ENCODE measurements at regions of chr2 and their contacts with region 1.

Region 1: GRCh38 chr2:55014962-55015939 is 35.0 kb downstream of the RTN4 start:
- DNase-seq: peak; percentile 83
- ATAC-seq: peak; percentile 76
- H3K4me3 ChIP-seq: no peak overlapping the region
- H3K27ac ChIP-seq: no peak overlapping the region
- H3K4me1 ChIP-seq: peaks cover 69% of the 10 kb centered on the region
- H3K27me3 ChIP-seq: no peaks in the 10 kb centered on the region
- CTCF ChIP-seq: peak; percentile 88

Region 2: GRCh38 chr2:54952978-54953545 is 62.2 kb before region 1 on chr2:
- CTCF ChIA-PET with region 1: no interaction called
- POLR2A ChIA-PET with region 1: no interaction called
- intact Hi-C with region 1: loop called (anchors 1 kb)
- DNase-seq: peak; percentile 91
- ATAC-seq: peak; percentile 80
- H3K4me3 ChIP-seq: peak overlapping the region; percentile 11
- H3K27ac ChIP-seq: peak overlapping the region; percentile 94
- H3K4me1 ChIP-seq: peaks cover 49% of the 10 kb centered on the region
- H3K27me3 ChIP-seq: no peaks in the 10 kb centered on the region
- CTCF ChIP-seq: no peak

Region 3: DNA sequence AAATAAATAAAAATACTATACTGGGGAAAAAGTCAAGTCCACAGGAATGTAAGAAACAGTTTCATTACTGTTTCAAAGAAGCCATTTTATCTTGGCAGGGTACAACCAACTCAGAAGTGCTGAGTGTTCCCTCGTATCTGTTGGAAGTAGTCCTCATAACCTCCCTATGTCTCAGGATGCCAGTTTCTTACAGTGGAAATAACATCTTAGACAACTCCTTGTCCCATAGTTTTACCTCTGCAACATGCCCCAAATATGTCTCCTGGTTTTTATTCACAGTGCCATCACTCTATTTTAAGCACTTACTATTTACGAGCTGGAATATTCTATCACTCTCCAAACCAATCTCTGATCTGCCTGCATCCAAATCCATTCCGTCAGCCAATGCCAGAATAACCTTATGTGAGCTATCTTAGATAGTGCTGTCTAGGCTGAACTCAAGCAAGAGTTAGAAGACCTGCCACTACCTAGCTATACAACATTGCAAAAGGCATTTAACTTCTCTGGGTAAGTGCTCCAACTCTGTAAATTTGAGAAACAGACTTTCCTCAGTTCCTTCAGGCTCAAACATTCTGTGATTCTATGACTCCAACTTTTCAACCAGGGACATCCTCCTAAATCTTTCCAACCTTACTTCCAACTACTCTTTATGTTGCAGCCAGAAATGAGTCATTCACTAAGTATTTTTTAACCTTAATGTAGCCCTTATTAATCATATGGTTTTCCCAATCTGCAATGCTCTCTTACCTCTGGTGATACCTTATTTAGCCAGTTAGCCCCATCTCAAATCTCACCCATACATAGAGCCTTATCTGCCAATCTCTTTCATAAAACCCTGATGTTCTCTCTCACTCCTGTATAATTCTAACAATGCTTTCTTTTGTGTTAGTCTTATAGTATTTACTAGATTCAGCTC is 31.6 kb before region 1 on chr2:
- CTCF ChIA-PET with region 1: no interaction called
- POLR2A ChIA-PET with region 1: no interaction called
- intact Hi-C with region 1: loop called (anchors 2 kb)
- DNase-seq: peak; percentile 92
- ATAC-seq: peak; percentile 80
- H3K4me3 ChIP-seq: 0 out of 2 replicates have a peak overlapping the region, but pooled peaks have one; percentile 3
- H3K27ac ChIP-seq: peak overlapping the region; percentile 80
- H3K4me1 ChIP-seq: peaks cover 65% of the 10 kb centered on the region
- H3K27me3 ChIP-seq: no peaks in the 10 kb centered on the region
- CTCF ChIP-seq: no peak

Region 4: DNA sequence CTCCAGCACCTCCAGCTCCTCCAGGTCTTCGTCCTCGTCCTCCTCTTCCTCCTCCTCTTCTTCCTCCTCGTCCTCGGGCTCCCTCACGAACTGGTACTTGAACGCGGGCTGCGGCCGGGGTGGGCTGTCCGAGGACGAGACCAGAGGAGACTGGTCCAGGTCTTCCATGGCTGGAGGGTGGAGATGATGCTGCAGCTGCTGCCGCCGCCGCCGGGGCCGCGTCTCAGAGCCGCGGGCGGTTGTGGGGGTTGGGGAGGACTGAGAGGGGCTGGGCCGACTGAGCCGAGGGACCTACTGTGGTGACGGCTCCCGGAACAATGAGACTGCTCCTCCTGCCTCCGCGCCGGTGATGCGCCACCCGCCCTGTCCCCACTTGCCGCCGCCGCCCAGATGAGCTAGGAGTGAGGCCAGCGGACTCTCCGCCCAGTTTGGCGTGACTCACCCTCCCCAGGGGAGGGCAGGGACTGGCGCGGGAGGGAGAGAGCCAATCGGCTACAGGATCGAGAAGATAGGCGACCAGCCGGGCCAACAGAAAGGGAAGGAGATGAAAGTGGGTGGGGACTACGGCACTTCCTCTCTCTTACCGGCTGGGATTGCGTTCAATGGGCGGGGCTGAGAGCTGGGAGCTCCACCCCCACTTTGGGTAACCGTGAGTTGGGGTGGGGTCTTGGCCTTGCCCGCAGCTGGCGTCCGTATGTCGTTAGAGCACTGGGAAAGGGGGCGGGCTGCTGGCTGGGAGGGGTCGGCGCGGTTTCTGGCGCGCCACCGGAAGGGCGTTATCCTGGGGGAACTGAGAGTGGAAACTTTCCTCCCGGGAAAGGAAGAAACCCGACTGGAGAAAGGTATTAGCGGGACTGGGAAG is 35.1 kb after region 1 on chr2 and contains the start of gene RTN4:
- CTCF ChIA-PET with region 1: no interaction called
- POLR2A ChIA-PET with region 1: interaction called, 3 read pairs
- intact Hi-C with region 1: loop called (anchors 1 kb)
- DNase-seq: peak; percentile 99
- ATAC-seq: peak; percentile 74
- H3K4me3 ChIP-seq: peak within 1 kb of the TSS; percentile 74
- H3K27ac ChIP-seq: peak within 1 kb of the TSS; percentile 97
- H3K4me1 ChIP-seq: peaks cover 26% of the 10 kb centered on the region
- H3K27me3 ChIP-seq: no peaks in the 10 kb centered on the region
- CTCF ChIP-seq: no peak
- total RNA-seq, gene RTN4: 150 and 170 TPM in 2 replicates

Region 5: DNA sequence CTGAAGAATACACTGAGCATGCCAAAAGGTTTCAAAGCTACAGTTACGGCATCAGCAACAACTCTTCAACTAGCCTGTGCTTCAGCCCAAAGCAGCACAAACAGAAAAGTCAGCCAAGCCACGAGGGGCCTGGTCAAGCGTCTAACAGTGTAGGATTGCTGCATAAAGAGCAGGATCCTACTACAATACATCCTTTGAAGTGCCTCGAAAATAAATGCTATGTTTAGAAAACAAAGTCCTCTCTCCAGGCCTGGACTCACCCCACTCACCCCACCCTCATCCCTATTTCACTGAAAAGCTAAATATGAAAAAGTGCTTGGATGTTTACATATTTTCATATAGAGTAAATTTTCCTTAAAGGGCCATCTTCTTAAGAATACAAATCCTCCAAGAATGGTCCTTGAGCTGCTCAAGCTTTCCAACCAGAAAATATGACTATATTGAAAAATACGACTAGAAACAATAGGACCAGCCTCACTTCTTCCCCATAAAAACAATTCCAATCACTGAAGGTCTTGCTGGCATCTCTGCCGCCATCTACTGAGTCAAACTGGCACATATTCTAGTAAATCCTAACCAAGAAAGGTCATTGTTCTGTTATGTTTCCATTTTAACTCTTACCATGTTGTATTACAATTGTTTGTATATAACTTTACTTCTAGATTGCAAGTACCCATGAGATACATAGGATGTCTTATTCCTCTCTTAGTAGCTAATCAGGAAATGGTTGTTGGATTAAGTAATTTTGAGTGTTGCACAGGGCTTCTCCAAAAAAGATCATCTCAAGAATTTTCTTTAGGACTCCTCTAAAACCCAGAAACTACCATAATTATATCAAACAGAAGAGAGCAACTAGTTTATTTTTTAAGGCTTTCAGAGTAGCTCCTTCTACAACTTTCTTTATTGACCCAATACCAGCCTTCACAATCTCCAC is 153.2 kb after region 1 on chr2:
- CTCF ChIA-PET with region 1: interaction called, 4 read pairs
- POLR2A ChIA-PET with region 1: no interaction called
- intact Hi-C with region 1: loop called (anchors 1 kb)
- DNase-seq: peak; percentile 77
- ATAC-seq: peak; percentile 60
- H3K4me3 ChIP-seq: no peak overlapping the region
- H3K27ac ChIP-seq: no peak overlapping the region
- H3K4me1 ChIP-seq: peaks cover 23% of the 10 kb centered on the region
- H3K27me3 ChIP-seq: no peaks in the 10 kb centered on the region
- CTCF ChIP-seq: peak; percentile 92

Region 6: DNA sequence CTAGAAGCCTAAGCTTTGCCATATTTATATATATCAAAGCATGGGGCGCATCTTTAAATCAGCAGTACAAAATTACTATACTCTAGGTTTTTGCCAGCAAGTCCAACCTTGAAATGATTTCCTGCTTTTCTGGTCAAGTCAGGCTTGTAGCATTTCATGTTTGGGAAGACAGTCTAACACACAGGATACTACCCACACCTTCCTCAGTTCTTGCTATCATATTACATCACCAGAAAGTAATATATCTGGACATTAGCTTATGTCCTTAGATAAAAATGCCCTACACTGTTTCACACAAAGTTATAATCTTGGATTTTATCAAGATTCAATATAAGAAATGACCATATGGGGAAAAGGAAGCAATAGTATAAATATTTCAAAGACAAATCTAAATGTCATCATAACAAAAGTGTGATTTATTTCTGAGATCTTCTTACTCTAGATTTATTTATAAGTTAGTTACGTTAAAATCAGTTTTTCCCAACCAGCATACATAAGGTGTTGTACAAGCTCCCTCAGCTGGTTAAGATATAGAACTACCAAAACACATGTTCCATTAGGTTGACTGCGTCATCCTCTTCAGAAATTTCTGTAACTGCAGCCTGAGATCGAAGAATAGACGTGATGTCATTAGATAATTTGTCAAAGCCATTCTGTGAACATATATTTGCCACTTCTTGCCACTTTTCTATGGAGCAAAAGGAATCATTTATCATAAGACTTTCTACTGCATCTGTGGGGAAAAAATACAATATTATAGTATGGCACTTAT is 160.2 kb after region 1 on chr2:
- CTCF ChIA-PET with region 1: interaction called, 4 read pairs
- POLR2A ChIA-PET with region 1: no interaction called
- intact Hi-C with region 1: loop called (anchors 1 kb)
- DNase-seq: peak; percentile 72
- ATAC-seq: peak; percentile 83
- H3K4me3 ChIP-seq: no peak overlapping the region
- H3K27ac ChIP-seq: no peak overlapping the region
- H3K4me1 ChIP-seq: no peaks in the 10 kb centered on the region
- H3K27me3 ChIP-seq: no peaks in the 10 kb centered on the region
- CTCF ChIP-seq: peak; percentile 91

Measured in PC-3 (cell line).